ENCODE measurements at regions of chr19 and their contacts with region 1.

Region 1: GRCh38 chr19:44575116-44575700 is 38.2 kb upstream of the IGSF23 start:
- DNase-seq: no peak
- H3K4me3 ChIP-seq: no peak overlapping the region
- H3K27ac ChIP-seq: no peak overlapping the region
- H3K4me1 ChIP-seq: no peaks in the 10 kb centered on the region
- H3K27me3 ChIP-seq: peaks cover 0 to 13% of the 10 kb centered on the region in 2 donors
- CTCF ChIP-seq: no peak

Region 2: GRCh38 chr19:44657211-44657921 is 82.2 kb after region 1 on chr19:
- intact Hi-C with region 1: loop called (anchors 2 kb)
- DNase-seq: peak; percentile 62 to 70
- H3K4me3 ChIP-seq: no peak overlapping the region
- H3K27ac ChIP-seq: no peak overlapping the region
- H3K4me1 ChIP-seq: peaks cover 0 to 4% (median 2%) of the 10 kb centered on the region in 4 donors
- H3K27me3 ChIP-seq: no peaks in the 10 kb centered on the region
- CTCF ChIP-seq: peak; percentile 89 to 91